ENCODE measurements at regions of chr1 and their contacts with region 1.

Region 1: GRCh38 chr1:201877877-201878401 is 10.8 kb upstream of the SHISA4 start:
- DNase-seq: no peak
- H3K4me3 ChIP-seq: no peak overlapping the region
- CTCF ChIP-seq: peak; percentile 66

Region 2: GRCh38 chr1:201709564-201710295 is 168.2 kb before region 1 on chr1:
- CTCF ChIA-PET with region 1: no interaction called
- POLR2A ChIA-PET with region 1: no interaction called
- DNase-seq: no peak
- H3K4me3 ChIP-seq: no peak overlapping the region
- CTCF ChIP-seq: peak; percentile 92

Region 3: DNA sequence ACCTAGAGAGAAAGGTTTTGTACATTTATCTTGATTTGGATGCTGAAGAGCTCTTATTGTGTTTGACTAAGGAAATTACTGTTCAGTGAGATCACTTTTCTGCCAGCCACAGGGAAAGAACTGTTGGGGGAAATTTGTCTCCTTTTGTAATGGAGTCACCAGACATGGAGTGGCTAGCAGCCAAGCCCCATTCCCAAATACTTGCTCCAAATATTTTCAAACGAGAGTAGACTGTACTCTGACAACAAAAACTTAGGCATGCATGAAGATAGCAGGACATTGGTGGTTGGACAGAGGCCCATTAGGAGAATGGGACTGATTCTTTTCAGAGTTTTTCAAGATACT is 27.9 kb before region 1 on chr1:
- CTCF ChIA-PET with region 1: interaction called, 19 read pairs
- POLR2A ChIA-PET with region 1: no interaction called
- DNase-seq: peak; percentile 80
- H3K4me3 ChIP-seq: no peak overlapping the region
- CTCF ChIP-seq: no peak

Region 4: GRCh38 chr1:201859424-201859823 is 18.5 kb before region 1 on chr1:
- CTCF ChIA-PET with region 1: interaction called, 17 read pairs
- POLR2A ChIA-PET with region 1: no interaction called
- DNase-seq: no peak
- H3K4me3 ChIP-seq: no peak overlapping the region
- CTCF ChIP-seq: no peak

Region 5: DNA sequence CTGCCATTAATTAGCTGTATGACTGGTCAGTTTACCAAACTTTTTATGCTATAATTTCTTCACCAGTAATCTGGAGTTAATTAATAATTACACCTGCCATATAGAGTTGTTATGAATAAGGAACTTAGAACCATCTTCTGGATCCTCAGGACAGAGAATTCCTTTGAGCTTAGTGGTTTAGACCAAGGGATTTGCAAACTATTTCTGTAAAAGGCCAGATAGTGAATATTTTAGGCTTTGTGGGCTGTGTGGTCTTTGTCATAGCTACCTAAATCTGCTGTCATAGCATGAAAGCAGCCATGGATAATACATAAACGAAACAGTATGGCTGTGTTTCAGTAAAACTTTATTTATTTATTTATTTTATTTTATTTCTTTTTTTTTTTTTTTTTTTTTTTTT is 86.3 kb after region 1 on chr1:
- CTCF ChIA-PET with region 1: interaction called, 244 read pairs
- POLR2A ChIA-PET with region 1: no interaction called
- DNase-seq: peak; percentile 73
- H3K4me3 ChIP-seq: no peak overlapping the region
- CTCF ChIP-seq: no peak

Region 6: GRCh38 chr1:202264300-202264699 is 386.4 kb after region 1 on chr1:
- CTCF ChIA-PET with region 1: no interaction called
- POLR2A ChIA-PET with region 1: no interaction called
- DNase-seq: no peak
- H3K4me3 ChIP-seq: no peak overlapping the region
- CTCF ChIP-seq: no peak

Measured in AG04449 (cell line).